Astrocyte of the cerebellum (primary cell): ENCODE measurements at regions of chr9 and their contacts with region 1.

Region 1: GRCh38 chr9:119991797-119992196 is 588.2 kb downstream of the CDK5RAP2 start:
- DNase-seq: no peak
- H3K4me3 ChIP-seq: no peak overlapping the region
- CTCF ChIP-seq: no peak

Region 2: GRCh38 chr9:120091206-120091605 is 99.4 kb after region 1 on chr9:
- in situ Hi-C with region 1: loop called (anchors 5 kb)
- DNase-seq: no peak
- H3K4me3 ChIP-seq: no peak overlapping the region
- CTCF ChIP-seq: no peak